Heart right ventricle (tissue), 16 donors: ENCODE measurements at regions of chr2 and their contacts with region 1.

Region 1: GRCh38 chr2:160493227-160494028 is at the start of gene RBMS1:
- DNase-seq: peak; percentile 70 to 73
- ATAC-seq: peak; percentile 59 to 87 (median 77)
- H3K4me3 ChIP-seq: peak within 1 kb of the TSS; percentile 73 to 92 (median 88)
- H3K27ac ChIP-seq: peak within 1 kb of the TSS; percentile 95 to 99 (median 97)
- H3K4me1 ChIP-seq: peaks cover 0 to 40% (median 27%) of the 10 kb centered on the region in 9 donors
- H3K27me3 ChIP-seq: peaks cover 0 to 9% (median 0%) of the 10 kb centered on the region in 7 donors
- CTCF ChIP-seq: no peak
- total RNA-seq, gene RBMS1: 54.1 to 77.7 (median 60.2) TPM

Region 2: DNA sequence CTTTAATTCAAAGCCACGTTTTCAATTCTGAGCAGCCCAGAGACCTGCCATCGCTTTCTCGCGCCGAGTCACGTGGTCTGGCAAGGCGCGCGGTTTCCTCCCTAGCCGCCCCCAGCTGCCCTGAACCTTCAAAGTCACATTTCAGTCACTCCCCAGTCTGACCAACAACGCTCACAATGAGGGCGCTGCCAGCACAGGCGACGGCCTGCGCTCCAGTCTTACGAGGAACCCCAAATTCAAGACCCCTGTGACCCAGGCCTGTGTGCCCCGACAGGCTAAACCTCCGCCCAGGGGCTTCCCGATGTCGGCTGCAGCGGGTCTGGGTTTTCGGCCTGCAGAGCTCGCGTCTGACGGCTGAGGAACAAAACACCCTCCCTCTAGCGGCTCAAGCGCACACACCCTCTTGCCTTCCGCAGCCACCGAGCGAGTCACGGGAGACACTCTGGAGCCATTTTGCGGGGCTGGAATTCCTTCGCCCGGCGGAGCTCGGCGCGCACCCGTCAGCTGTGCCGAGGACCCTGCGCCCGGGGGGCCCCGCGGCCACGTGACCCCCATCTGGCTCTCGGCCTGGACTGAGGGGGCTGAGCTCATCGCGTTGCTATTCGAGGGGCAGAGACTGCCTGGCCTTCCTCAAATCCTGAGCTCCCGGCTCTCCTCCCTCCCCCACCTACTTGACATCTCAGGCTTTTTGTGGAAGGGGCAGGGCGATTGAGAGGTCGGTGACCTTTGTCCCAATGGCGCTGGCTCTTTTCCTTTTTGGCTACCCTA is 223.4 kb before region 1 on chr2:
- intact Hi-C with region 1: loop called in 2 of 10 experiments (anchors 2 to 10 kb)
- DNase-seq: peak; percentile 88 to 93
- ATAC-seq: peak; percentile 88 to 94 (median 92)
- H3K4me3 ChIP-seq: peak overlapping the region; percentile 12 to 60 (median 56)
- H3K27ac ChIP-seq: peak overlapping the region; percentile 90 to 99 (median 95)
- H3K4me1 ChIP-seq: peaks cover 4 to 43% (median 33%) of the 10 kb centered on the region in 9 donors
- H3K27me3 ChIP-seq: no peaks in the 10 kb centered on the region
- CTCF ChIP-seq: peak; percentile 60 to 85 (median 69)

Region 3: DNA sequence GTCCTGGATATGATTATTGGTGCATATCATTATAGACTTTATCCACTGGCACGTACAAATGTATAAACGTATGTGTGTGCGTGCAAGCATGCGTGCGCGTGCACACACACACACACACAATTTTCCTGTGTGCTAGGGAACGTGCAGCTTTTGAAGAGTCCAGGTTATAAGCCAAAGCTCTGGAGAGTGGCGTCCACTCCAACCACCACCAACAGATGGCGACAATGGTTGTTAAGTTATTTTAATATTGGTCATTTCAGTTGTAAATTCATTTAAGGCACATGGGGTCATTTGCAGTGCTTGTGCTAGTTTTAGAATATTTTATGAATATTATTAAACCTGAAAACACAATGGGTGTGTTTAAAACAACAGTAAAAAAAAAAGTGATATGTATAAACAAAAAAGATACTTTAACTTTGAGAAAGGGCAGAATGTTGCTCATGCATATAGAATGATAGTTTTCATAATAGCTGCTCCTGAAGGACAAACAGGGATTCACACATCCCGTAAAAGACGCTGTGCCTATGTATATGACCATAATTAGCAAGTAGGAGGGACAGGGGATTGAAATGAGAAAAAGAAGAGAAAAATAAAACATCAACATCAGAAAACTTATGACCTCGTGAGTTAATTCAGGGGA is 169.1 kb before region 1 on chr2:
- intact Hi-C with region 1: loop called in 6 of 10 experiments (anchors 5 to 10 kb)
- DNase-seq: peak; percentile 51 to 67
- ATAC-seq: peak in 7 of 8 donors; percentile 31 to 62 (median 40)
- H3K4me3 ChIP-seq: no peak overlapping the region
- H3K27ac ChIP-seq: peak overlapping the region in 3 of 10 donors; percentile 9 to 82 (median 36)
- H3K4me1 ChIP-seq: peaks cover 0 to 97% (median 77%) of the 10 kb centered on the region in 9 donors
- H3K27me3 ChIP-seq: no peaks in the 10 kb centered on the region
- CTCF ChIP-seq: peak; percentile 47 to 85 (median 73)

Region 4: GRCh38 chr2:160406591-160407392 is 86.6 kb before region 1 on chr2:
- intact Hi-C with region 1: loop called in 4 of 10 experiments (anchors 5 to 10 kb)
- DNase-seq: peak; percentile 50 to 65
- ATAC-seq: peak; percentile 12 to 67 (median 52)
- H3K4me3 ChIP-seq: peak overlapping the region; percentile 79 to 97 (median 90)
- H3K27ac ChIP-seq: peak overlapping the region; percentile 88 to 100 (median 96)
- H3K4me1 ChIP-seq: peaks cover 4 to 82% (median 77%) of the 10 kb centered on the region in 9 donors
- H3K27me3 ChIP-seq: no peaks in the 10 kb centered on the region
- CTCF ChIP-seq: peak in 1 of 9 donors; percentile 5

Region 5: GRCh38 chr2:160454070-160454797 is 39.2 kb before region 1 on chr2:
- intact Hi-C with region 1: loop called in 1 of 10 experiments (anchors 5 kb)
- DNase-seq: no peak
- ATAC-seq: peak in 2 of 8 donors; percentile 8 to 34
- H3K4me3 ChIP-seq: no peak overlapping the region
- H3K27ac ChIP-seq: peak overlapping the region in 5 of 10 donors; percentile 6 to 57 (median 27)
- H3K4me1 ChIP-seq: peaks cover 8 to 85% (median 70%) of the 10 kb centered on the region in 9 donors
- H3K27me3 ChIP-seq: no peaks in the 10 kb centered on the region
- CTCF ChIP-seq: no peak

Region 6: DNA sequence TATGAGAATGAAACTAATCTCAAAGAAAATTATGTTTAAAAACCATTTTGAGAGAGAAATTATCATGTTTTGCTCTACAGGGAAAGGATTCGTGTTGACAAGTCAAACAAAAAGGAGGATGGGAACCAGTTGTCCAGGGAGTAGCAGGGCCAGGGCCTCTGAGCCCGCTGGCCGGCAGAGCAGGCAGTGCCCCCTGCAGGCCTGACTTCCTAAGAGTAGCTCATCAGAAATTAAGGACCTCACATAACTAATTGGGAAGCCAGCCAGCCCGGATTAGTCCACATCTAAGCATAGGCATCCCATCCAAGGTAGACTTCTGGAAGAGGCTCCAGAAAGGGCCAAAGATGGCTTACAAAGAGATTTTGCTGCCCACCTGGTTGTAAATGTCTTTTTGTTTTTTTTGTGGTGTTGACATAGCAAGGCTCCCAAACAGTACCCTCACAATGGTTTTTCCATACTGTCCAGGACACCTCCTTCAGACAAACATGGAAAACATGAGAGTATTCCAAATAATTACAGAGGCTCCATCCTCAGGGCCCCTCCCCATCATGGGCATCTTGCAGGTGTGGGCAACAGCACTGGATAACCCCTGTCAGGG is 425.6 kb after region 1 on chr2:
- intact Hi-C with region 1: loop called in 2 of 10 experiments (anchors 5 to 10 kb)
- DNase-seq: peak; percentile 66 to 71
- ATAC-seq: peak; percentile 77 to 94 (median 90)
- H3K4me3 ChIP-seq: no peak overlapping the region
- H3K27ac ChIP-seq: peak overlapping the region in 5 of 10 donors; percentile 3 to 34 (median 10)
- H3K4me1 ChIP-seq: peaks cover 0 to 40% (median 19%) of the 10 kb centered on the region in 9 donors
- H3K27me3 ChIP-seq: no peaks in the 10 kb centered on the region
- CTCF ChIP-seq: peak; percentile 56 to 79 (median 71)